Activated CD4-positive, alpha-beta T cell treated with anti-CD3 and anti-CD28 coated beads, Interleukin-2, amount 10 ng/mL, durations not matched to agents 7 days and 5 days (primary cell): ENCODE measurements at regions of chr14 and their contacts with region 1.

Region 1: GRCh38 chr14:100078991-100079725 is 13.9 kb downstream of the EVL start:
- DNase-seq: peak; percentile 93
- H3K4me3 Mint-ChIP-seq: peak overlapping the region; percentile 78
- H3K27ac Mint-ChIP-seq: peak overlapping the region; percentile 90
- H3K4me1 Mint-ChIP-seq: peaks cover 97% of the 10 kb centered on the region
- H3K27me3 Mint-ChIP-seq: no peaks in the 10 kb centered on the region

Region 2: DNA sequence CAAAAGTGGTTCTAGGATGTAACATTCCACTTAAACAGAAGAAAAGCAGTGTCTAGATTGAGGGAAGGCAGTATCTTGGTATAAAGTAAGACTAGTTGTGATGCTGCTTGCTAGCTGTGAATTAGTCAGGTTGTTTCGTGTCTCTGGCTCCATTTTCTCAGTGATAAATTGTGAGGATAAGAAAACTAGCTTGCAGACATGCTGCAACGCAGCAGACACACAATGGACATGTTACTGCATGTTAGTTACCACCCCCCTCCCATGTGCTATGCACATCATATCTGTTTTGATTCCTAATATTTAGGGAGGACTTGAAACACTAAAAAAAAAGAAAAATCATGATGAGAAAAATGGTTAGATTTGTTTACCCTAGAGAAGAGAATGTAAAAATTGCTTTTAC is 595.1 kb before region 1 on chr14:
- CTCF ChIA-PET with region 1: no interaction called
- POLR2A ChIA-PET with region 1: no interaction called
- DNase-seq: no peak
- H3K4me3 Mint-ChIP-seq: no peak overlapping the region
- H3K27ac Mint-ChIP-seq: no peak overlapping the region
- H3K4me1 Mint-ChIP-seq: peaks cover 43% of the 10 kb centered on the region
- H3K27me3 Mint-ChIP-seq: no peaks in the 10 kb centered on the region

Region 3: GRCh38 chr14:100067971-100068959 is 10.9 kb before region 1 on chr14:
- CTCF ChIA-PET with region 1: interaction called, 114 read pairs
- POLR2A ChIA-PET with region 1: interaction called, 9 read pairs
- DNase-seq: peak; percentile 92
- H3K4me3 Mint-ChIP-seq: peak overlapping the region; percentile 92
- H3K27ac Mint-ChIP-seq: peak overlapping the region; percentile 98
- H3K4me1 Mint-ChIP-seq: peaks cover 41% of the 10 kb centered on the region
- H3K27me3 Mint-ChIP-seq: no peaks in the 10 kb centered on the region

Region 4: GRCh38 chr14:100091386-100091785 is 12.2 kb after region 1 on chr14:
- CTCF ChIA-PET with region 1: interaction called, 19 read pairs
- POLR2A ChIA-PET with region 1: interaction called, 3 read pairs
- DNase-seq: no peak
- H3K4me3 Mint-ChIP-seq: no peak overlapping the region
- H3K27ac Mint-ChIP-seq: peak overlapping the region; percentile 77
- H3K4me1 Mint-ChIP-seq: peaks cover 91% of the 10 kb centered on the region
- H3K27me3 Mint-ChIP-seq: no peaks in the 10 kb centered on the region

Region 5: GRCh38 chr14:100108042-100108825 is 29.1 kb after region 1 on chr14:
- CTCF ChIA-PET with region 1: interaction called, 29 read pairs
- POLR2A ChIA-PET with region 1: interaction called, 4 read pairs
- DNase-seq: peak; percentile 88
- H3K4me3 Mint-ChIP-seq: no peak overlapping the region
- H3K27ac Mint-ChIP-seq: peak overlapping the region; percentile 87
- H3K4me1 Mint-ChIP-seq: peaks cover 80% of the 10 kb centered on the region
- H3K27me3 Mint-ChIP-seq: no peaks in the 10 kb centered on the region